Endothelial cell of umbilical vein (primary cell): ENCODE measurements at regions of chr6 and their contacts with region 1.

Region 1: GRCh38 chr6:15691250-15691869 is 28.5 kb upstream of the DTNBP1 start:
- DNase-seq: peak; percentile 86
- H3K4me3 ChIP-seq: no peak overlapping the region
- H3K27ac ChIP-seq: no peak overlapping the region
- H3K4me1 ChIP-seq: peaks cover 3% of the 10 kb centered on the region
- H3K27me3 ChIP-seq: peaks cover 1 to 2% of the 10 kb centered on the region in 2 experiments
- CTCF ChIP-seq: peak; percentile 99 to 100
- POLR2A ChIP-seq: no peak

Region 2: GRCh38 chr6:15893556-15894268 is 202.4 kb after region 1 on chr6:
- CTCF ChIA-PET with region 1: interaction called, 3 read pairs
- POLR2A ChIA-PET with region 1: no interaction called
- dilution Hi-C with region 1: no loop called
- intact Hi-C with region 1: loop called (anchors 1 kb)
- DNase-seq: peak; percentile 50
- H3K4me3 ChIP-seq: no peak overlapping the region
- H3K27ac ChIP-seq: no peak overlapping the region
- H3K4me1 ChIP-seq: peaks cover 18% of the 10 kb centered on the region
- H3K27me3 ChIP-seq: no peaks in the 10 kb centered on the region
- CTCF ChIP-seq: peak; percentile 34 to 42
- POLR2A ChIP-seq: no peak

Region 3: GRCh38 chr6:16146527-16146955 is 455.2 kb after region 1 on chr6:
- CTCF ChIA-PET with region 1: interaction called, 21 read pairs
- POLR2A ChIA-PET with region 1: no interaction called
- dilution Hi-C with region 1: no loop called
- intact Hi-C with region 1: no loop called
- DNase-seq: peak; percentile 93
- H3K4me3 ChIP-seq: no peak overlapping the region
- H3K27ac ChIP-seq: no peak overlapping the region
- H3K4me1 ChIP-seq: peaks cover 11% of the 10 kb centered on the region
- H3K27me3 ChIP-seq: no peaks in the 10 kb centered on the region
- CTCF ChIP-seq: no peak
- POLR2A ChIP-seq: no peak

Region 4: DNA sequence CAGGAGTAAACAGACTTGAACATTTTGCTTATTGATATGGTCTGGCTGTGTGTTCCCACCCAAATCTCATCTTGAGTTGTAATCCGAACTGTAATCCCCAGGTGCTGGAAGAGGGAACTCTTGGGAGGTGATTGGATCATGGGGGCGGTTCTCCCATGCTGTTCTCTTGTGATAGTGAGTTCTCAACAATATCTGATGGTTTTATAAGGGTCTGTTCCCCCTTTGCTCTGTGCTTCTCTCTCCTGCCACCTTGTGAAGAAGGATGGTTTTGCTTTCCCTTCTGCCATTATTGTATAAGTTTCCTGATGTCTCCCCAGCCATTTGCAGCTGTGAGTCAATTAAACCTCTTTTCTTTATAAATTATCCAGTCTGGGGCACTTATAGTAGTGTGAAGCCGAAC is 477.5 kb after region 1 on chr6:
- CTCF ChIA-PET with region 1: interaction called, 79 read pairs
- POLR2A ChIA-PET with region 1: interaction called, 3 read pairs
- dilution Hi-C with region 1: no loop called
- intact Hi-C with region 1: loop called (anchors 1 kb)
- DNase-seq: peak; percentile 79
- H3K4me3 ChIP-seq: no peak overlapping the region
- H3K27ac ChIP-seq: no peak overlapping the region
- H3K4me1 ChIP-seq: no peaks in the 10 kb centered on the region
- H3K27me3 ChIP-seq: peaks cover 3% of the 10 kb centered on the region in 2 experiments
- CTCF ChIP-seq: peak; percentile 27 to 67
- POLR2A ChIP-seq: no peak

Region 5: GRCh38 chr6:16277101-16277981 is 586.0 kb after region 1 on chr6:
- CTCF ChIA-PET with region 1: interaction called, 4 read pairs
- POLR2A ChIA-PET with region 1: no interaction called
- dilution Hi-C with region 1: no loop called
- intact Hi-C with region 1: loop called (anchors 1 kb)
- DNase-seq: peak; percentile 96
- H3K4me3 ChIP-seq: no peak overlapping the region
- H3K27ac ChIP-seq: peak overlapping the region; percentile 73
- H3K4me1 ChIP-seq: peaks cover 9% of the 10 kb centered on the region
- H3K27me3 ChIP-seq: no peaks in the 10 kb centered on the region
- CTCF ChIP-seq: peak; percentile 79 to 80
- POLR2A ChIP-seq: no peak